Dorsolateral prefrontal cortex (tissue), 120 donors: ENCODE measurements at regions of chr19 and their contacts with region 1.

Region 1: DNA sequence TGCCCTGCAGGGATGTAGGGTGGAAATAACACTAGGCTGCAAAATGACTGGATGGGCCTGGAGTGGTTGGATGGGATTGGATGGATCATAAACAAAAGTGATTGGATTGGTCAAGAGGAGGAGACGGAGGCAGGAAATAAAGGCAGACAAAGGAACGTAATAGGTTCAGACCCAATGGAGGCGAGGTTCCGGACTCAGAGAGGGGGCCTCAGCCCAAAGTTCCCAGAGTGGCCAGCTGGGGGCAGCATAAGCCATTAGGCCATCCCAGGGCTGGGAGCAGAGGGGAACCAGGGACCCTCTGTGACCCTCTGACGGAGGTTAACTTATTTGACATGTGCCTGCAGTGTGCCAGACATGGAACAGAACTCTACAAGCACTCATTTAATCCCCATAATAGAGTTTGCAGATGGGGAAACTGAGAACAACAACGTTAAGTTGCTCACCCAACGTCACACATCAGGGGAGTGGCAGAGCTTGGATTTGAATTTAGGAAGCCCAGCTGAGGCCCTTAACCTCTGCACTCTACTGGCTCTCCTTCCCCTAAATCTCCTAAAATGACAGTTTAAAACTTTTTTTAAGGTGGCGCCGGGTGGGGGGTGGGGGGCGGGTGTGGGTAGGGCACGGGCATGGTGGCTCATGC is 15.3 kb upstream of the MAP1S start:
- DNase-seq: peak in 7 of 10 donors; percentile 31 to 77 (median 68)
- H3K4me3 ChIP-seq: no peak overlapping the region
- H3K27ac ChIP-seq: no peak overlapping the region
- H3K27me3 ChIP-seq: peaks cover 0 to 6% (median 0%) of the 10 kb centered on the region in 45 donors
- CTCF ChIP-seq: peak; percentile 72 to 97 (median 92)

Region 2: DNA sequence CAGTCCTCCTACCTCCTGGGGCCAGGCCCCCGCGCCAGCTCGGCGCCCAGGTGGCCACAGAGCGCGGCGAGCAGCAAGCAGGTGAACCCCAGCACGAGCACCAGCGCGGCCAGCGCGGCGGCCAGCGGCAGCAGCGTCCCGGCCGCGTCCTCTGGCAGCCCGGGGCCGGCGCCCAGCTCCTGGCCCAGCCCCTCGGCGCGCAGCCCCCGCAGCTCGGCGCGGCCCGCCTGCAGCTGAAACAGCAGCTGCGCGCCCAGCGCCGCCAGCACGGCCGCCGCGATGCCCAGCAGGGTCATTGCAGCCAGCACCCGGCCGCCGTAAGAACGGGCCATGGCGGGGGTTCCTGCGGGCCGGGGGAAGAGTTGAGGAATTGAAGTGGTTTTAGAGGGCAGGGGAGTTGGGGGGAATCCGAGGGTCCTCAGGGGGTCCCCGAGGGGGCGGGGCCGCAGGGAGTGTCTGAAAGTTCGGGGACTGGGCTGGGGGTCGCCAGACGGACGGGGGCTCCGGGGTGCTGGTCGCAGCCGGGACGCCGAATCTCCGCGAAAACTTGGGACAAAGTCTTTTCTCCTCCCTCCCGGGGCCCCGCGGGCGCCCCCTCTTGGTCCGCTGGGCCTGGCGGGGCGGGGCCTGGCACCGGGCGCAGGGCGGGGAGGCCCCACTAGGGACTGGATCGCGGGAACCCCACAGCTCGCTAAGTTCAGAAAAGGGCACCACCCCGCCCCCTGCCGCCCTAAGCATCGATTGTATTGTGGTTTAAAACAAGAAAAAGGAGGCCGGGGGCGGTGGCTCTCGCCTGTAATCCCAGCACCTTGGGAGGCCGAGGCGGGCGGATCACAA is 255.6 kb before region 1 on chr19 and contains the start of gene TMEM221:
- intact Hi-C with region 1: loop called in 1 of 2 experiments (anchors 10 kb)
- DNase-seq: peak in 1 of 10 donors; percentile 56
- H3K4me3 ChIP-seq: peak within 1 kb of the TSS; percentile 23 to 67 (median 49)
- H3K27ac ChIP-seq: peak within 1 kb of the TSS in 8 of 59 donors; percentile 16 to 55 (median 36)
- H3K27me3 ChIP-seq: no peaks in the 10 kb centered on the region
- CTCF ChIP-seq: peak in 54 of 56 donors; percentile 15 to 66 (median 46)
- total RNA-seq, gene TMEM221: 1.2 to 7.2 (median 4.1) TPM

Region 3: GRCh38 chr19:17766543-17767131 is 62.7 kb after region 1 on chr19:
- intact Hi-C with region 1: loop called (anchors 5 kb)
- DNase-seq: peak in 9 of 10 donors; percentile 76 to 85 (median 81)
- H3K4me3 ChIP-seq: peak overlapping the region in 19 of 59 donors; percentile 2 to 42 (median 19)
- H3K27ac ChIP-seq: peak overlapping the region in 57 of 59 donors; percentile 16 to 100 (median 78)
- H3K27me3 ChIP-seq: no peaks in the 10 kb centered on the region
- CTCF ChIP-seq: peak; percentile 23 to 88 (median 77)

Region 4: GRCh38 chr19:17772172-17772571 is 68.2 kb after region 1 on chr19:
- intact Hi-C with region 1: loop called (anchors 5 kb)
- DNase-seq: no peak
- H3K4me3 ChIP-seq: no peak overlapping the region
- H3K27ac ChIP-seq: peak overlapping the region in 5 of 59 donors; percentile 8 to 30 (median 18)
- H3K27me3 ChIP-seq: no peaks in the 10 kb centered on the region
- CTCF ChIP-seq: no peak